Activated T-helper 2 cell treated with anti-CD3 and anti-CD28 coated beads, Interferon-gamma antibody, Interleukin-2, Interleukin-4, amounts not matched to agents 10 μg/mL and 5 μg/mL and 100 μg/mL, durations not matched to agents 14 hours and 24 hours and 36 hours (primary cell): ENCODE measurements at regions of chrX and their contacts with region 1.

Region 1: GRCh38 chrX:124619710-124620109 is 273.3 kb downstream of the SH2D1A start:
- DNase-seq: no peak
- H3K4me3 Mint-ChIP-seq: no peak overlapping the region
- H3K27ac Mint-ChIP-seq: no peak overlapping the region
- H3K4me1 Mint-ChIP-seq: no peaks in the 10 kb centered on the region
- H3K27me3 Mint-ChIP-seq: no peaks in the 10 kb centered on the region

Region 2: GRCh38 chrX:123728016-123728415 is 891.7 kb before region 1 on chrX:
- intact Hi-C with region 1: no loop called
- DNase-seq: no peak
- H3K4me3 Mint-ChIP-seq: peak overlapping the region; percentile 17
- H3K27ac Mint-ChIP-seq: no peak overlapping the region
- H3K4me1 Mint-ChIP-seq: peaks cover 22% of the 10 kb centered on the region
- H3K27me3 Mint-ChIP-seq: no peaks in the 10 kb centered on the region

Region 3: GRCh38 chrX:124232523-124233201 is 387.0 kb before region 1 on chrX:
- intact Hi-C with region 1: no loop called
- DNase-seq: no peak
- H3K4me3 Mint-ChIP-seq: no peak overlapping the region
- H3K27ac Mint-ChIP-seq: no peak overlapping the region
- H3K4me1 Mint-ChIP-seq: peaks cover 15% of the 10 kb centered on the region
- H3K27me3 Mint-ChIP-seq: no peaks in the 10 kb centered on the region

Region 4: DNA sequence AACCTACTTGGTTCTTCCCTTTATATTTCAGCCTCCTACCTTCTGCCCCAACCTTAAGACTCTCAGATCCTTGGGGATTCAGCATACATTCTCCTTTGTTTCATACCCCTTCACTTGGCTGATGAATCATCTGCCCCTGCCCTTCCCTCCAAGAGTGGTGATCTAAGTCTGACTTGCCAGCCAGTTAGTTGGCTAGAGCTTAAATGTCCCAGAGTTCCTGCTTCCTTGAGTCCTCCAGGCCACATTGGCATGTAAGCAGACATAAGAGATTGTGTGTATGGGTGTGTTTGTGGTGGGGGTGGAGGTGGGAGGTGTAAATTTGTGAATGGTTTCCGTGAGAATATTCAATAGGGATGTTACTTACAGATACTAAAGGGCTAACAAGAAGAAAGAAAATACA is 290.9 kb before region 1 on chrX:
- intact Hi-C with region 1: no loop called
- DNase-seq: no peak
- H3K4me3 Mint-ChIP-seq: no peak overlapping the region
- H3K27ac Mint-ChIP-seq: peak overlapping the region; percentile 78
- H3K4me1 Mint-ChIP-seq: peaks cover 26% of the 10 kb centered on the region
- H3K27me3 Mint-ChIP-seq: no peaks in the 10 kb centered on the region

Region 5: DNA sequence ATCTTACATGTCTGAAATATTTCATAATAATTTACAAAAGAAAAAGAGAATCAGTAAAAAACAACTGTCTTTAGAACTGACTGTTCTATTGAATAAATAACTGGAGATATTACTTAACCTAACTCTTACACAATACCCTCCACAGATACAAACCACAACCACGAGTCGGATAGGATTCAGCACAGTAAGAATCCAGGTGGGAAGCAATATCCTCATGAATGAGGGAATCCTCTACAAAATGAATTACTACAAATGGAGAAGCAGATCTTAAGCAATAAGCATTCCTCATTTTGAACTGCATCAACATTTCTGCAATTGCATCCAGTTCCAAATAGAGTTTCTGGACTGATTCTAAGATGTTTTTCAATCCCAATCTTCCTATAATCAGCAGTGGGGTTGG is 46.2 kb before region 1 on chrX:
- intact Hi-C with region 1: no loop called
- DNase-seq: no peak
- H3K4me3 Mint-ChIP-seq: no peak overlapping the region
- H3K27ac Mint-ChIP-seq: no peak overlapping the region
- H3K4me1 Mint-ChIP-seq: no peaks in the 10 kb centered on the region
- H3K27me3 Mint-ChIP-seq: no peaks in the 10 kb centered on the region

Region 6: DNA sequence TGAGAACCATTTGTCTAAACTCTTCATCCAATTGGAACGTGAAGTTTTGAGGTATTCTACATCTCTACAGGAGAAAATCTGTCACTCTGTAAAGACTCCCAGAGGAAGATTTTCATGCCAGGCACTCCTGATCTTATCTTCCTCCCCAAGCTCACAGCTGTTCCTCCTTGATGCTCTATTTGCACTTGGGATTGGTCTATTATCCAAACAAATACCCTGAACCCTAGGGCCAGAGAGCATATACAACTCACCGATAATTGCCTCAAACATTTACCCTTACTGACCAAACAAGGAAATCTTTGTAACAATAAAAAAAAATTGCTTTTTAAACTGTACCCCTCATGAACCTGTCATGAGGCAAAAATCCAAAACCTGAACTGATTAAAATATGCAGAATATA is 99.3 kb after region 1 on chrX:
- intact Hi-C with region 1: loop called (anchors 5 kb)
- DNase-seq: no peak
- H3K4me3 Mint-ChIP-seq: no peak overlapping the region
- H3K27ac Mint-ChIP-seq: no peak overlapping the region
- H3K4me1 Mint-ChIP-seq: peaks cover 7% of the 10 kb centered on the region
- H3K27me3 Mint-ChIP-seq: no peaks in the 10 kb centered on the region